Right ventricle myocardium inferior (tissue), 1 donor: ENCODE measurements at regions of chr1 and their contacts with region 1.

Region 1: GRCh38 chr1:7572654-7573152 is 198.4 kb upstream of the VAMP3 start:
- DNase-seq: peak; percentile 44
- ATAC-seq: no peak

Region 2: GRCh38 chr1:7539769-7540175 is 32.9 kb before region 1 on chr1:
- intact Hi-C with region 1: no loop called
- DNase-seq: peak; percentile 11
- ATAC-seq: no peak

Region 3: DNA sequence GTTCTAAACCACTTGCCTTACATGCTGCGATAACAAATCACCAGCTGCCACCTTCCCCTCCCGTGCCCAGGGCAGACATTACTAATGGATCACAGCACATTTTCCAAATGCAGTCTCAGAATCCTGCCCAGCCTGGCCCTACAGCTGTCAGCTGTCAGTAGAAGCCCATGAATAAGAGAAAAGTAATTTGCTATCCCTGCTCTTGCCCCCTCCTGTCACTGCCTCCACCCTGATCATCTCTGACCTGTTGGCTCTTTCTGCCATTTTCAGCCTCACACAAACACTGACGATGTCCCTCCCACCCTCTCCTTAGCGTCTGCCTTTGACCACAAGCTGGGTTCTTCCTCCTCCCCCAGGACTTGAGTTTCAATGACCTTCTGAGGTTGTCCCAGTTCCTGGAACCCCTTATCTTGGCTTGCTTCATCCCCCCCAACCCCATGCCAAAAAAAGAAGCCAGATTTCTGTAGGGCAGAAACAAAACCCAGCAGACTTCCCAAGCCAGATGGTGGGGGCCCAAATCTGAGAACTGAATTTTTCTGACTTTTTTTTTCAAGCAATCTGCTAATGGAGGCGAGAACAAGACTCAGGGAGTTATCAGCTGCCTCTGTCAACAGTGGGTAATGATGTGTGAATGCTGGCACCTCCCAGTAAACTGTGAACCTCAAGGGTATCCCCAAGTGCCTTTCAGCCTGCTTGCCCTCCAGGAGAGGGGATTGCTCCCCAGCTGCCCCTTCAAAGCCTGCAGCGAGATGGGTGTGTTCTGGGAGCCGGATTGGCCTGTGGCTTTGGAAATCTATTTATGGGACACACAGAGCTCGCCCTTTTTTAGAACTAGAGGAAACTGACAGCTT is 18.1 kb before region 1 on chr1:
- intact Hi-C with region 1: loop called (anchors 2 kb)
- DNase-seq: peak; percentile 34
- ATAC-seq: no peak